Vagina (tissue), 2 donors: ENCODE measurements at regions of chrX and their contacts with region 1.

Region 1: DNA sequence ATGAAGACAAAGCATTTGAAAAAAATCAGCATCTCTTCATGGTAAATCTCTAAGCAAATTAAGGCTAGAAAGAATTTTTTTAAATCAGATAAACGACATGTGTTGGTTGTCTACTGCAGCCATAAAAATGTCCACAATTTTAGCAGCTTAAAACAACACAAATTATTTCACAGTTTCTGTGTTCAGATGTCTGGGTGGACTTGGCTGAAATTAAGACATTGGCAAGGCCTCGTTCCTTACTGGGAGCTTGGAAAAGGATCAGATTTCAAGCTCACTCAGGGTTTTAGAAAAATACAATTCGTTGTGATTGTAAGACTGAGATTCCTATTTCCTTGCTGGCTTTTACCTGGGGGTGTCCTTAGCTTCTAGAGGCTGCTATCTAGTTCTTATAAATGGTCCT is 1470.6 kb downstream of the PCDH19 start:
- DNase-seq: no peak
- H3K4me3 ChIP-seq: no peak overlapping the region
- H3K27ac ChIP-seq: no peak overlapping the region
- H3K4me1 ChIP-seq: no peaks in the 10 kb centered on the region
- H3K27me3 ChIP-seq: no peaks in the 10 kb centered on the region
- CTCF ChIP-seq: no peak
- POLR2A ChIP-seq: no peak

Region 2: GRCh38 chrX:97446298-97446882 is 1493.1 kb before region 1 on chrX:
- intact Hi-C with region 1: loop called (anchors 10 kb)
- DNase-seq: no peak
- H3K4me3 ChIP-seq: no peak overlapping the region
- H3K27ac ChIP-seq: no peak overlapping the region
- H3K4me1 ChIP-seq: no peaks in the 10 kb centered on the region
- H3K27me3 ChIP-seq: no peaks in the 10 kb centered on the region
- CTCF ChIP-seq: no peak
- POLR2A ChIP-seq: no peak

Region 3: GRCh38 chrX:99051639-99052038 is 112.2 kb after region 1 on chrX:
- intact Hi-C with region 1: no loop called
- DNase-seq: no peak
- H3K4me3 ChIP-seq: no peak overlapping the region
- H3K27ac ChIP-seq: no peak overlapping the region
- H3K4me1 ChIP-seq: no peaks in the 10 kb centered on the region
- H3K27me3 ChIP-seq: no peaks in the 10 kb centered on the region
- CTCF ChIP-seq: no peak
- POLR2A ChIP-seq: no peak

Region 4: DNA sequence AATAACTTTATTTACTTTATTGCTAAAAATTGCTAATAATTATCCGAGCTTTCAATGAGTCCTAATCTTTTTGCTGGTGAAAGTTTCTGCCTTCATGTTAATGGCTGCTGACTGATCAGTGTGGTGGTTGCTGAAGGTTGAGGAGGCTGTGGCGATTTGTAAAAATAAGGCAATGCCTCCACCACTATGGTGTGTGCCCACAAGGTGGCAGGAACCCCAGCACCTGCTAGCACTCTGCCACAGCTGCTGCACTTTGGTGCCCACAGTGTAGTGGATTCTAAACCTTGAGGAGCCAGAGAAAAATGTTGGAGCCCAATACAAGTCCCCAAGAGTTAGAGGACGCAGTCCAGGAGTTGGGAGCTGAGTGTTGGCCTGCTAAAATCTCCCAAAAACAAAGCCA is 233.5 kb after region 1 on chrX:
- intact Hi-C with region 1: no loop called
- DNase-seq: no peak
- H3K4me3 ChIP-seq: no peak overlapping the region
- H3K27ac ChIP-seq: no peak overlapping the region
- H3K4me1 ChIP-seq: no peaks in the 10 kb centered on the region
- H3K27me3 ChIP-seq: no peaks in the 10 kb centered on the region
- CTCF ChIP-seq: no peak
- POLR2A ChIP-seq: no peak

Region 5: GRCh38 chrX:99271641-99272040 is 332.2 kb after region 1 on chrX:
- intact Hi-C with region 1: no loop called
- DNase-seq: no peak
- H3K4me3 ChIP-seq: no peak overlapping the region
- H3K27ac ChIP-seq: no peak overlapping the region
- H3K4me1 ChIP-seq: no peaks in the 10 kb centered on the region
- H3K27me3 ChIP-seq: no peaks in the 10 kb centered on the region
- CTCF ChIP-seq: no peak
- POLR2A ChIP-seq: no peak